A549 (cell line): ENCODE measurements at regions of chr20 and their contacts with region 1.

Region 1: GRCh38 chr20:44187051-44187762 is at the start of gene JPH2:
- DNase-seq: peak; percentile 58 to 60
- ATAC-seq: peak; percentile 74 to 81
- H3K4me3 ChIP-seq: peak within 1 kb of the TSS; percentile 48
- H3K27ac ChIP-seq: peak within 1 kb of the TSS; percentile 81 to 86
- H3K4me1 ChIP-seq: peaks cover 25% of the 10 kb centered on the region
- CTCF ChIP-seq: no peak
- EP300 ChIP-seq: no peak
- POLR2A ChIP-seq: 0 out of 2 replicates have a peak, but pooled peaks have one; percentile 32
- RAD21 ChIP-seq: no peak
- polyA plus RNA-seq, gene JPH2: 0.83 and 1.0 TPM in 2 replicates

Region 2: GRCh38 chr20:44104798-44105517 is 82.2 kb before region 1 on chr20:
- CTCF ChIA-PET with region 1: interaction called, 43 read pairs
- POLR2A ChIA-PET with region 1: no interaction called
- DNase-seq: peak in 1 of 2 experiments; percentile 37
- ATAC-seq: peak; percentile 50 to 63; a peak in 4 of 6 replicates
- H3K4me3 ChIP-seq: no peak overlapping the region
- H3K27ac ChIP-seq: no peak overlapping the region
- H3K4me1 ChIP-seq: no peaks in the 10 kb centered on the region
- CTCF ChIP-seq: no peak
- EP300 ChIP-seq: no peak
- POLR2A ChIP-seq: no peak
- RAD21 ChIP-seq: no peak

Region 3: DNA sequence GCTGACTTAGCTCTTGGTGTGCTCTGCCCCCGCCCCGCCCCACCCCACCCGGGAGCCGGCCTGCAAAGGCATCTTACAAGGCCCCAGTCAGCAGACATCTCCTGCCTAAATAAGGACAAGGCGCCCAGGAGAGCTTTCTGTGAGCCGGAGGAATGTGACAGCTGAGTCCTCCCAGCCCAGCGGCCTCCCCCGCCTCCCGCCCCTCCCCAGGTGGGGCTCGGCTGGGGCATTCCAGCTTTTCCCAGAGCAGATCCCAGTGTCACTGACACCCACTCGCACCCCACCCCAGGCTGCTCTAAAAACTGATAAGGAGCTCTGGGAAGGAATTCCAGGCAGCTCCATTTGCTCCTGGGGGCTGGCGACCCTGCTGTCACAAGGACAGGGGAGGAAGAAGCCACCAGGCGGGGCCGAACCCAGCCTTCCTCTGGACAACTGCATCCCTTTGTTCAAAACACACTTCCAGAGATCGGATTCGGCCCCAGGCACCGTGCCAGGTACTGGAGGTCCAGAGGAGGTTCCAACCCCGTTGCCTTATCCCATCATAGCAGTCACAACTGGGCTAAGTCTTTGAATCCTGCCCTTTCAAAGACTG is 49.9 kb before region 1 on chr20:
- CTCF ChIA-PET with region 1: interaction called, 39 read pairs
- POLR2A ChIA-PET with region 1: no interaction called
- DNase-seq: peak in 1 of 2 experiments; percentile 33
- ATAC-seq: no peak; a peak in 1 of 6 replicates
- H3K4me3 ChIP-seq: no peak overlapping the region
- H3K27ac ChIP-seq: no peak overlapping the region
- H3K4me1 ChIP-seq: no peaks in the 10 kb centered on the region
- CTCF ChIP-seq: no peak
- EP300 ChIP-seq: no peak
- POLR2A ChIP-seq: no peak
- RAD21 ChIP-seq: no peak

Region 4: GRCh38 chr20:44153636-44154043 is 33.6 kb before region 1 on chr20:
- CTCF ChIA-PET with region 1: interaction called, 17 read pairs
- POLR2A ChIA-PET with region 1: no interaction called
- DNase-seq: no peak
- ATAC-seq: peak in 1 of 2 experiments; percentile 56; a peak in 2 of 6 replicates
- H3K4me3 ChIP-seq: no peak overlapping the region
- H3K27ac ChIP-seq: no peak overlapping the region
- H3K4me1 ChIP-seq: 0 out of 3 replicates have a peak, but pooled peaks cover 3% of the 10 kb centered on the region
- CTCF ChIP-seq: no peak
- EP300 ChIP-seq: no peak
- POLR2A ChIP-seq: no peak
- RAD21 ChIP-seq: no peak

Region 5: GRCh38 chr20:44166477-44166876 is 20.7 kb before region 1 on chr20:
- CTCF ChIA-PET with region 1: interaction called, 72 read pairs
- POLR2A ChIA-PET with region 1: interaction called, 15 read pairs
- DNase-seq: peak; percentile 41 to 65
- ATAC-seq: peak; percentile 75 to 79
- H3K4me3 ChIP-seq: no peak overlapping the region
- H3K27ac ChIP-seq: peak overlapping the region; percentile 67 to 83
- H3K4me1 ChIP-seq: peaks cover 38% of the 10 kb centered on the region
- CTCF ChIP-seq: no peak
- EP300 ChIP-seq: no peak
- POLR2A ChIP-seq: no peak
- RAD21 ChIP-seq: no peak